Sigmoid colon (tissue), 7 donors: ENCODE measurements at regions of chr1 and their contacts with region 1.

Region 1: DNA sequence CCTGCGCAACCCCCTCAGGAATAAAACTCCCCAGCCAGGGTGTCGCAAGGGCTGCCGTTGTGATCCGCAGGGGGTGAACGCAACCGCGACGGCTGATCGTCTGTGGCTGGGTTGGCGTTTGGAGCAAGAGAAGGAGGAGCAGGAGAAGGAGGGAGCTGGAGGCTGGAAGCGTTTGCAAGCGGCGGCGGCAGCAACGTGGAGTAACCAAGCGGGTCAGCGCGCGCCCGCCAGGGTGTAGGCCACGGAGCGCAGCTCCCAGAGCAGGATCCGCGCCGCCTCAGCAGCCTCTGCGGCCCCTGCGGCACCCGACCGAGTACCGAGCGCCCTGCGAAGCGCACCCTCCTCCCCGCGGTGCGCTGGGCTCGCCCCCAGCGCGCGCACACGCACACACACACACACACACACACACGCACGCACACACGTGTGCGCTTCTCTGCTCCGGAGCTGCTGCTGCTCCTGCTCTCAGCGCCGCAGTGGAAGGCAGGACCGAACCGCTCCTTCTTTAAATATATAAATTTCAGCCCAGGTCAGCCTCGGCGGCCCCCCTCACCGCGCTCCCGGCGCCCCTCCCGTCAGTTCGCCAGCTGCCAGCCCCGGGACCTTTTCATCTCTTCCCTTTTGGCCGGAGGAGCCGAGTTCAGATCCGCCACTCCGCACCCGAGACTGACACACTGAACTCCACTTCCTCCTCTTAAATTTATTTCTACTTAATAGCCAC is 696 bp downstream of the TGFB2 start:
- DNase-seq: peak; percentile 90
- H3K4me3 ChIP-seq: peak overlapping the region; percentile 66 to 78 (median 70)
- H3K27ac ChIP-seq: peak overlapping the region; percentile 87 to 96 (median 90)
- H3K4me1 ChIP-seq: peaks cover 0 to 44% (median 26%) of the 10 kb centered on the region in 4 donors
- H3K27me3 ChIP-seq: no peaks in the 10 kb centered on the region
- CTCF ChIP-seq: no peak
- EP300 ChIP-seq: peak in 1 of 4 donors; percentile 1
- POLR2A ChIP-seq: peak in 1 of 2 donors; percentile 8

Region 2: GRCh38 chr1:218273762-218274479 is 71.9 kb before region 1 on chr1:
- intact Hi-C with region 1: no loop called
- DNase-seq: no peak
- H3K4me3 ChIP-seq: no peak overlapping the region
- H3K27ac ChIP-seq: no peak overlapping the region
- H3K4me1 ChIP-seq: no peaks in the 10 kb centered on the region
- H3K27me3 ChIP-seq: no peaks in the 10 kb centered on the region
- CTCF ChIP-seq: no peak
- EP300 ChIP-seq: no peak
- POLR2A ChIP-seq: no peak

Region 3: GRCh38 chr1:218380151-218380977 is 34.5 kb after region 1 on chr1:
- intact Hi-C with region 1: no loop called
- DNase-seq: no peak
- H3K4me3 ChIP-seq: no peak overlapping the region
- H3K27ac ChIP-seq: peak overlapping the region in 3 of 4 donors; percentile 20 to 63 (median 51)
- H3K4me1 ChIP-seq: peaks cover 0 to 54% (median 34%) of the 10 kb centered on the region in 4 donors
- H3K27me3 ChIP-seq: no peaks in the 10 kb centered on the region
- CTCF ChIP-seq: no peak
- EP300 ChIP-seq: no peak
- POLR2A ChIP-seq: no peak

Region 4: DNA sequence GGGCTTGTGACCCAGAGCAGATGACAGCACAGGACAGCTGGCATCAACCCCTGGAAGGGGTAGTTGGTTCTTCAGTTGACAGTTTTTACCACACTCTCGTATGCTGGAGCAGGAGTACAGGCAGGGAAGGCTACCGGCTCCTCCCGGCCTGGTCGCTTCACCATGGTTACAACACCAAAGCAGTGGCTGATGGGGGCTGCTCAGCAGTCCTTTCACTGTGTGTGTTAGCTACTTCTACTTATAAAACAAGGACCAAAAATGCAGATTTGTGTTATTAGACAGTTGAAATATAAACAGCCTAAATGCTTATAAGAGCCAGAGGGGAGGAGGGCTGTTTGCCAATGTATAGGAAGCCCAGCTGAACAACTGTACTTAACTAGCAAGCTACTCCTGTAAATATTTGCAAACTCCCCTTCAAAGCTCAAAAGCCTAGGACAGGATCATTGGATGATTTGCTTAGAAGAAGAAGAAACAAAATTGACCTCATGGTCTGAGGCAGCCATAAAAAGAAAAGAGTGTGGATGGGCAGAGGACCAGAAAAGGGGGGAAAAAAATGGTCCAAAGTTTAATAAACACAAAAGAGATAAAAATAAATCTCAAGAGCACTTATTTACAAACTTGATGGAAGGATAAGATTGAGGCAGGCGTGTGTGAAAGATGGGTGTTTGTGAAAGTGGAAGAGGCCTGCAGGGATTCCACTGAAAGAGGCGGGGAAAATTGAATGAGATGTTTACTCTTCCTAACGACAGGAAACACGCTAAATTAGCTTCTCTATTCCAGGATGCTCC is 56.4 kb after region 1 on chr1:
- intact Hi-C with region 1: loop called (anchors 5 kb)
- DNase-seq: peak; percentile 70
- H3K4me3 ChIP-seq: no peak overlapping the region
- H3K27ac ChIP-seq: peak overlapping the region; percentile 63 to 81 (median 72)
- H3K4me1 ChIP-seq: peaks cover 0 to 35% (median 26%) of the 10 kb centered on the region in 4 donors
- H3K27me3 ChIP-seq: no peaks in the 10 kb centered on the region
- CTCF ChIP-seq: no peak
- EP300 ChIP-seq: no peak
- POLR2A ChIP-seq: no peak

Region 5: GRCh38 chr1:218439541-218440295 is 93.9 kb after region 1 on chr1:
- intact Hi-C with region 1: loop called (anchors 5 kb)
- DNase-seq: peak; percentile 69
- H3K4me3 ChIP-seq: no peak overlapping the region
- H3K27ac ChIP-seq: peak overlapping the region in 3 of 4 donors; percentile 59 to 63 (median 60)
- H3K4me1 ChIP-seq: peaks cover 0 to 13% (median 8%) of the 10 kb centered on the region in 4 donors
- H3K27me3 ChIP-seq: no peaks in the 10 kb centered on the region
- CTCF ChIP-seq: no peak
- EP300 ChIP-seq: no peak
- POLR2A ChIP-seq: no peak

Region 6: GRCh38 chr1:218480137-218480536 is 134.3 kb after region 1 on chr1:
- intact Hi-C with region 1: loop called (anchors 5 kb)
- DNase-seq: peak; percentile 65
- H3K4me3 ChIP-seq: no peak overlapping the region
- H3K27ac ChIP-seq: peak overlapping the region; percentile 63 to 86 (median 75)
- H3K4me1 ChIP-seq: peaks cover 0 to 55% (median 38%) of the 10 kb centered on the region in 4 donors
- H3K27me3 ChIP-seq: no peaks in the 10 kb centered on the region
- CTCF ChIP-seq: no peak
- EP300 ChIP-seq: no peak
- POLR2A ChIP-seq: no peak

Region 7: DNA sequence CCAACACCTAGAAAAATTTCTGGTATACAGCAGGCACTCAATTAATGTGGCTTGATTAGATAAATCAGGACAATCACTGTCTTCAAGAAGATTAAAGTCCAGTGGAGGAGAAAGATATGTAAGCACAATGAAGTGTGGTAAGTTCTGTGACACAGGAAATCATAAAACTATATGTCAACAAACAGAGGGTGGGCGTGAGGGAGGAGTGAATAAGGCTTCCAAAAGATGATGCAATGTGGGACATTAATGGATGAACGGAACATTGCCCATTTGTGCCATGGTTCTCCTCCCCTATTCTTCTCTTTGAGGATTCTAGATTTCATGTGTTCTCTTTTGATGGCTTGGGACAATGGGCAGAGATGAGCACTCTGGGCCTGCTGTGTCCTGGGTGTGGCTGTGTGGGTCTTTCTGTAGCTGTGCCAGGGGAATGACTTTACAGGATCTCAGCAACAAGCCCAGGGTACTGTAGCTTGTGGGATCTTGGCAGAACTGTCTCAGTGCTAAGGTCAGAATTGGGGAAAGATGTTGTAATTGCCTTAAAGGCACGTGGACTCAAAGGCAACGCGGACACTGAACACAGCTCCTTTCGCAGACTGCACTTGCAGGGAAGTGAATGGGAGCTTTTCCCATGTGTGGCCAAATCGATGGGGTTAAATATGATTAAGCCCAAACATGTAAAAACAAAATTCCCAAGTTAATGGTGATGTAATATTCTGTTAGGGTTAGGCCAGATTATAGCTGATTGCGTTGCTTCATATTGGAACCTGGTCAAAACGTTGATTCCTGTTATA is 366.2 kb after region 1 on chr1:
- intact Hi-C with region 1: no loop called
- DNase-seq: peak; percentile 71
- H3K4me3 ChIP-seq: no peak overlapping the region
- H3K27ac ChIP-seq: no peak overlapping the region
- H3K4me1 ChIP-seq: no peaks in the 10 kb centered on the region
- H3K27me3 ChIP-seq: no peaks in the 10 kb centered on the region
- CTCF ChIP-seq: no peak
- EP300 ChIP-seq: no peak
- POLR2A ChIP-seq: no peak

Region 8: DNA sequence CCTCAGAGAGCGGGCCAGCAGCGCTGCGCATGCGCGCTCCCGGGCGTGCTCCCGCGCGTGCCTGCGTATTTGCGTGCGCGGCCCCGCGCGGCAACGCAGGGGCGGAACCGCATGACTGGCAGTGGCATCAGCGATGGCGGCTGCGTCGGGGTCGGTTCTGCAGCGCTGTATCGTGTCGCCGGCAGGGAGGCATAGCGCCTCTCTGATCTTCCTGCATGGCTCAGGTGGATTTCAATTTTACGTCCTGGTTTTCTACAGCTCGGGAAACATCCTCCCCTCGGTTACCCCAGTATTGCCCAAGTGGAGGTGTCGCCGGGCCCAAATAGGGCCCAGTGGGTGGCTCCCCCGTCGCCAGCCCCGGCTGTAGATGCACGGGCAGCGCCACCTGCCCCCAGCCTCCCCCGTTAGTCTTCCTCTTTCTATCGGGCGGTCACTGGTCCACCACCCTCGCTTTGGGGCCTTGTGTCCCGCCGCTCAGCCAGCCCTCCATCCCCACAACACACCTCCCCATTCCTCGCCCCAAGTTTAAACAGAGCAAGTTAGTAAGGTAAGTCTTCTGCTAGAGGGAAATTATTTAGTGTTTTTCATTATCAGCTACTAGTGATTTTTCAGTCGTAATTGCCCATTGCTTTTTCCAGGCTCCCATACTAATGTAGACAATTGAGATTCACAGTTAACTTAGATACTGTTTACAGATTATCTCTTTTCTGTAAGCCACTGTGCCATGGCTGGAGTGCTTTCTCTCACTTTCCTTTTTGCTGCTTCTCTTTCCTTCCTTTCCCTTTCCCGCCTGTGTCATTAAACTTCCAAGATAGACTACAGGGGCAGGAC is 828.1 kb after region 1 on chr1 and contains the start of gene LYPLAL1:
- intact Hi-C with region 1: loop called (anchors 5 kb)
- DNase-seq: peak; percentile 94
- H3K4me3 ChIP-seq: peak within 1 kb of the TSS; percentile 65 to 80 (median 72)
- H3K27ac ChIP-seq: peak within 1 kb of the TSS; percentile 91 to 96 (median 92)
- H3K4me1 ChIP-seq: peaks cover 0 to 60% (median 35%) of the 10 kb centered on the region in 4 donors
- H3K27me3 ChIP-seq: no peaks in the 10 kb centered on the region
- CTCF ChIP-seq: peak in 1 of 4 experiments; percentile 9
- EP300 ChIP-seq: peak in 1 of 4 donors; percentile 43
- POLR2A ChIP-seq: peak; percentile 89
- total RNA-seq, gene LYPLAL1: 22.4 to 36.0 (median 32.1) TPM

Region 9: GRCh38 chr1:219298571-219299148 is 952.8 kb after region 1 on chr1:
- intact Hi-C with region 1: loop called (anchors 10 kb)
- DNase-seq: peak; percentile 73
- H3K4me3 ChIP-seq: no peak overlapping the region
- H3K27ac ChIP-seq: peak overlapping the region; percentile 21 to 76 (median 63)
- H3K4me1 ChIP-seq: peaks cover 0 to 39% (median 30%) of the 10 kb centered on the region in 4 donors
- H3K27me3 ChIP-seq: no peaks in the 10 kb centered on the region
- CTCF ChIP-seq: no peak
- EP300 ChIP-seq: no peak
- POLR2A ChIP-seq: no peak